ENCODE measurements at regions of chr1 and their contacts with region 1.

Region 1: DNA sequence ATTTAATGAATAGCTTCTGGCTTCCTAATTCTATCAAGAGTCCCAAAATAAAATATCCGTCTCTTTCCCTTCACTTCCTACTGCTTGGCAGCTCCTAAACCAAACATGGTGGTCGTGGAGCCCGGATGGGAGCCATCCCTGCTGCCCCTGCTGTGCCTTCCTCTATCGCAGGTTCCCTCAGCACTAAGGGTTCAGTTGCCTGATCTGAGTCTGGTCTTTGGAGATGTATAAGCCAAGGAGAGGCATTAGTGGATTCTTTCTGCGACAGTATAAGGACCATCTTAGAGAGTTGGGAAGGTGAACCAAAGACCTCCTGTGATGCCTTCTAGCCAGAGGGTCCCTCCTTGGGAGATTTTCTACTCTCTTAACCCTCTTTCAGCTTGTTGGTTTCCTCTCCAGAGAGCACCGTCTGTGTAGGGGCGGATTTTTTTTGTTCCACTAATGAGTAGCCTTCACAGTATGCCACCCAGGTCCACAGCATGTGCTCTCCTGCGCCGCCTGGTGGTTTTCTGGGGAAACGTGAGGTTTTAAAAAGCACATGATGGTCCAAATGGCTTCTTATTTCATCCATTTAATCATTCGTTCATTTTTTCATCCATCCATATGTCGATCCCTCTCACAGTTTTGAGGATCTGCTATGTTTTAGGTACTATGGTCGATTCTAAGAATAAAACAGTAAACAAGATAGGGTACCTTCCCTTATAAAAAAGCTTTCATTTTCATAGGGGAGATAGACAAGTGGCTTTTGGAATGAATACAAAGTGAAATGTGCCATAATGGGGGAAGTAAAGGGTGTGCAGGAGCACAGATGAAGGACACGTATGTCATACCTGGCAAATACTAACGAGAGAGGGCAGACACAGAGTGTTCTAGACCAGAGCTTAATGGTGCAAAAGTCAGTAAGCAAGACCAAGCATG is 71.0 kb downstream of the NFASC start:
- DNase-seq: peak; percentile 58
- ATAC-seq: peak; percentile 24
- H3K4me3 ChIP-seq: no peak overlapping the region
- H3K4me3 Mint-ChIP-seq: no peak overlapping the region
- H3K27ac ChIP-seq: no peak overlapping the region
- H3K27ac Mint-ChIP-seq: no peak overlapping the region
- H3K4me1 ChIP-seq: peaks cover 0 to 7% of the 10 kb centered on the region in 2 donors
- H3K4me1 Mint-ChIP-seq: peaks cover 3% of the 10 kb centered on the region
- H3K27me3 ChIP-seq: peaks cover 0 to 25% (median under 1%) of the 10 kb centered on the region in 4 experiments
- H3K27me3 Mint-ChIP-seq: peaks cover 6% of the 10 kb centered on the region
- CTCF ChIP-seq: peak; percentile 81

Region 2: DNA sequence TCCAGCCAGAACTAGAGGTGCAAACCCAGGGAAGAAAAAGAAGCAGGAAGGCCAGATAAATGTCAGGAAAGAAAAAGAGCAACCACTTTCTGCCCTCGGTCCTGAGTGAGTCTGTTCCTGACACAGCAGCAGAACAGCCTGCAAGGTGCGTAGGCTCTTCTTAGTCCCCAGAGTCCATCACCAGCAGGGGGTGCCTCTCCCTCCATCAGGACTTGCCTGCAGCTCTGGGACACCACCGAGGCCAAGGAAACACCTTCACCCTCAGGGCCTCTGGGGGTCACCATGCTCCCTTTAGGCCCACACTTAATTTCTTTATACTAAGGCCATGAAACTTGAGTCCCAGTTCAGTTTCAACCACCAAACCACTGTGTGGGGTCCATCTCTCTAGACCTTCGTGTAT is 114.7 kb before region 1 on chr1:
- CTCF ChIA-PET with region 1: no interaction called
- POLR2A ChIA-PET with region 1: no interaction called
- intact Hi-C with region 1: loop called (anchors 2 kb)
- DNase-seq: peak; percentile 26
- ATAC-seq: no peak
- H3K4me3 ChIP-seq: no peak overlapping the region
- H3K4me3 Mint-ChIP-seq: no peak overlapping the region
- H3K27ac ChIP-seq: no peak overlapping the region
- H3K27ac Mint-ChIP-seq: no peak overlapping the region
- H3K4me1 ChIP-seq: peaks cover 10 to 16% of the 10 kb centered on the region in 2 donors
- H3K4me1 Mint-ChIP-seq: peaks cover 11% of the 10 kb centered on the region
- H3K27me3 ChIP-seq: peaks cover 0 to 44% (median 19%) of the 10 kb centered on the region in 4 experiments
- H3K27me3 Mint-ChIP-seq: peaks cover 62% of the 10 kb centered on the region
- CTCF ChIP-seq: no peak

Measured in B cell (primary cell).